Caco-2 (cell line): ENCODE measurements at regions of chr1 and their contacts with region 1.

Region 1: GRCh38 chr1:178634445-178634844 is 90.6 kb upstream of the RALGPS2 start:
- DNase-seq: peak; percentile 10 to 63
- H3K4me3 ChIP-seq: no peak overlapping the region
- H3K4me3 Mint-ChIP-seq: no peak overlapping the region
- H3K27ac Mint-ChIP-seq: no peak overlapping the region
- H3K4me1 ChIP-seq: peaks cover 15% of the 10 kb centered on the region; the same call in 1 of the 2 replicates
- H3K4me1 Mint-ChIP-seq: peaks cover 13% of the 10 kb centered on the region
- H3K27me3 ChIP-seq: no peaks in the 10 kb centered on the region
- H3K27me3 Mint-ChIP-seq: no peaks in the 10 kb centered on the region
- CTCF ChIP-seq: no peak

Region 2: DNA sequence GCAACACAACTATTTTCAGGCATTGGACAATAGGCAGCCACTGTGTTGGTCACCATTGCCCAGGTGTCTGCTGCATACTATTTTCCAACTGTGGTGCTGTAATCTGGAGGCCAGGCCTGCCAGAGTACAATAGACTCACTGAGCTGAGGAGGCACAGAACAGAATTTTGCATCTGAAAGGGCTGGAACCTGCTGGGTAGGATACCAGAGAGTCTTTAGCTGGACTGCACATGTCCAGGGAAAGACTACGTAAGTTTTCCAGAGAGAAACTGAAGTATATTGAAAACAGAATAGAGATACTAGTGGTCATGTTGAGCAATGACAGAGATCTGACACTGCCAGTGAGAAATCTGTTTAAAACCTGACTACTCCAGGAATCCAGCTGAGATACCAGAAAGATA is 339.8 kb before region 1 on chr1:
- CTCF ChIA-PET with region 1: no interaction called
- POLR2A ChIA-PET with region 1: no interaction called
- intact Hi-C with region 1: no loop called
- DNase-seq: peak in 1 of 2 experiments; percentile 17
- H3K4me3 ChIP-seq: no peak overlapping the region
- H3K4me3 Mint-ChIP-seq: no peak overlapping the region
- H3K27ac Mint-ChIP-seq: no peak overlapping the region
- H3K4me1 ChIP-seq: peaks cover 19% of the 10 kb centered on the region
- H3K4me1 Mint-ChIP-seq: peaks cover 17% of the 10 kb centered on the region
- H3K27me3 ChIP-seq: no peaks in the 10 kb centered on the region
- H3K27me3 Mint-ChIP-seq: no peaks in the 10 kb centered on the region
- CTCF ChIP-seq: peak in 1 of 2 experiments; percentile 29

Region 3: GRCh38 chr1:178650934-178651511 is 16.6 kb after region 1 on chr1:
- CTCF ChIA-PET with region 1: no interaction called
- POLR2A ChIA-PET with region 1: no interaction called
- intact Hi-C with region 1: loop called (anchors 1 kb)
- DNase-seq: peak; percentile 60
- H3K4me3 ChIP-seq: no peak overlapping the region
- H3K4me3 Mint-ChIP-seq: no peak overlapping the region
- H3K27ac Mint-ChIP-seq: peak overlapping the region; percentile 55
- H3K4me1 ChIP-seq: peaks cover 28% of the 10 kb centered on the region
- H3K4me1 Mint-ChIP-seq: peaks cover 28% of the 10 kb centered on the region
- H3K27me3 ChIP-seq: no peaks in the 10 kb centered on the region
- H3K27me3 Mint-ChIP-seq: no peaks in the 10 kb centered on the region
- CTCF ChIP-seq: no peak